ENCODE measurements at regions of chr3 and their contacts with region 1.

Region 1: DNA sequence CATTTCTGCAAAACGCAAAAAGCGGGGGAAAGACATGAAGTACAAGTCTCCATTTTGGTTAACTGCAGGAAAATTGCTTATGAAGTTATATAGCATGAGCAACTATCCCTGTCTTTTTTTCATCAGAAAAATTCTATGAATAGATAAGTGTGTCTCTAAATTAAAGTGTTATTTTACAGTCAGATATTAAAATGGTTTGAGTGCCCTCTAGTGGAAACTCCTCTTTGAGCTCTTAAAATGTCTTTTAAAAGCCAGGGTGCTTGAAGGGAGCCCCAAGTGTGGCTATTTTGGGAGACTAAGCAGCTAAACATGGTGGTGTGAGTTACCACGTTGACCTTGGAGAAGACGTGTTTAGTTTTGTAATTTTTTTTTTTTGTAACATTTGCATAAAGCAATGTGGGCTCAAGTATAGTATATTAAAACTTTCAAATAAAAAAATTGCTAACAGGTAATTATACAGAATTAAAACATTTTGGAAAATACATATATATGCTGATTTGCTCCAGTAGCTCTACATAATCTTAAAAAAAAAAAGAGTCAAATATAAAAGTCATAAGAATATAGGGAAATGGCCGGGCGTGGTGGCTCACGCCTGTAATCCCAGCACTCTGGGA is 77.2 kb downstream of the PPP2R3A start:
- DNase-seq: no peak
- ATAC-seq: peak in 4 of 8 donors; percentile 26 to 60 (median 42)
- H3K4me3 ChIP-seq: no peak overlapping the region
- H3K27ac ChIP-seq: peak overlapping the region in 1 of 10 donors; percentile 7
- H3K4me1 ChIP-seq: peaks cover 0 to 10% (median 0%) of the 10 kb centered on the region in 9 donors
- H3K27me3 ChIP-seq: no peaks in the 10 kb centered on the region
- CTCF ChIP-seq: peak; percentile 33 to 77 (median 67)

Region 2: GRCh38 chr3:135918580-135918962 is 124.1 kb before region 1 on chr3:
- intact Hi-C with region 1: loop called (anchors 1 to 5 kb)
- DNase-seq: no peak
- ATAC-seq: peak in 5 of 8 donors; percentile 42 to 74 (median 66)
- H3K4me3 ChIP-seq: no peak overlapping the region
- H3K27ac ChIP-seq: no peak overlapping the region
- H3K4me1 ChIP-seq: peaks cover 0 to 10% (median 0%) of the 10 kb centered on the region in 9 donors
- H3K27me3 ChIP-seq: no peaks in the 10 kb centered on the region
- CTCF ChIP-seq: peak; percentile 20 to 66 (median 48)

Region 3: GRCh38 chr3:136516656-136517055 is 473.9 kb after region 1 on chr3:
- intact Hi-C with region 1: no loop called
- DNase-seq: no peak
- ATAC-seq: no peak
- H3K4me3 ChIP-seq: no peak overlapping the region
- H3K27ac ChIP-seq: no peak overlapping the region
- H3K4me1 ChIP-seq: peaks cover 0 to 13% (median 5%) of the 10 kb centered on the region in 9 donors
- H3K27me3 ChIP-seq: no peaks in the 10 kb centered on the region
- CTCF ChIP-seq: no peak